Ascending aorta (tissue), 2 donors: ENCODE measurements at regions of chr12 and their contacts with region 1.

Region 1: DNA sequence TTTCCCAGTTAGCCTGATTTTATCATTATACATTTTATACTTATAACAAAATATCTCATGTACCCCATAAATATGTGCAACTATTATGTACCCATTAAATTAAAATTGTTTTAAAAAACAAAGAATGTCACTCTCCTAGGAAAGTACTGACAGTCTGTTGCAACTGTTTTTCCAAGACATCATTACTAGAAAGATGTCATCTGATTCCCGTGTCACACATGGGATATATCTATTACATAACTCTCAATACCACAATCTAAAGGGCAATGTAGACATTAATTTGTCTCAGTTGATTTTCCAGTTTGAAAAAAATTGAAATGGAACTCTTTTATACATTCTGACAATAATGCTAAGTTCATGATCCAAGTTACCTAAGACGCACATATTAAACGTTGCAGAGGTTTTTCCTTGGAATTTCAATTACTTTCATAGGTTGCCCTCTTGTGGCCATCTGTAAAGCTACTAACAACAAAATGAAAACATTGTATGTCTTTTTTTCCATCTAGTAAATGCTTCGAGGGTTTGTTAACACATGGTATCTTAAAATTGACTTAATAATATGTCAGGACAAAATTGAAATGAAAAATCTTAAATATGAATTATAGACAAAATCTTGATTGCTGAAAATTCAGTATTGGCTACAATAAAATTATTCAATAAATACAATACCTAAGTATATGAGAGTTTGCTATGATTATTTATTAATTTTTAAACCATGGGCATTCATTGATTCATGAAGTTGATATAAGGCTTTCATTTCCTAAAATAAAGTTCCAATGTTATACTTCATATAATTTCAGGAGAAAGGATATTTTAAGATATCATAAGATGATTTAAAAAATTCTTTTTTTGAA is 131.6 kb downstream of the PPFIA2 start:
- DNase-seq: no peak
- H3K4me3 ChIP-seq: no peak overlapping the region
- H3K27ac ChIP-seq: no peak overlapping the region
- H3K4me1 ChIP-seq: no peaks in the 10 kb centered on the region
- H3K27me3 ChIP-seq: no peaks in the 10 kb centered on the region
- CTCF ChIP-seq: peak in 2 of 3 experiments; percentile 51 to 65

Region 2: GRCh38 chr12:81450920-81451739 is 176.4 kb before region 1 on chr12:
- intact Hi-C with region 1: loop called (anchors 1 kb)
- DNase-seq: no peak
- H3K4me3 ChIP-seq: no peak overlapping the region
- H3K27ac ChIP-seq: no peak overlapping the region
- H3K4me1 ChIP-seq: no peaks in the 10 kb centered on the region
- H3K27me3 ChIP-seq: no peaks in the 10 kb centered on the region
- CTCF ChIP-seq: peak in 2 of 3 experiments; percentile 44 to 57